ENCODE measurements at regions of chr12 and their contacts with region 1.

Region 1: DNA sequence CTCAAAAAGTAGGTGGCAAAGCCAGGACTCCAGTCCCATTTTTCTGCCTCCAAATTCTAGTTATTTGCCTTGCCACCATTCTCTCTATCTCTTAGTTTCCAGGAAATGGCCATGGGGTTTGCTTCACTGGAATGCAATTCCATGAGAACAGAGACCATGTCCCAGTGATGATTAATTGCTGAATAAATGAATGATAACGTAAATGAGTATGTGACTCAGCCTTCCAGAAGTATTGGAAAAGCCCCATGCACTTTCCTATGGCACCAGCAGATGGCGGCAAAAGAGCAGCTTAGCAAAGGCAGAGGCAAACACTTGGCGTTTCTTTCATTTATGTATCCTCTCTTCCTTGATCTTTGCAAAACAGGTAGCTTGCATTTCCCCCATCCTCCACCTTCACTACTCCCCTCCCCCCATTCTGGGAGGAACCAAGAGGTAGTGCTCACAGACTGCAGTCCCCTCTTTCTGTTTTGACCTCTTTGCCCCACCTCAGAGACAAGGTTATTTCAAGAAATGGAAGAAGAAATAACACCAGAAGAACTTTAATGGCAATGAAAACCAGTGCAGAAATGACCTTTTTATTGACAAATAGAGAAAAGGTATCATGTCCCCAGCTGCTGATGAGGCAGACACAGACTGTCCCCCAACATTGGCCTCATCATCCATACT is 21.3 kb downstream of the TBX3 start:
- DNase-seq: peak; percentile 84 to 92
- H3K4me3 ChIP-seq: no peak overlapping the region
- H3K27ac ChIP-seq: no peak overlapping the region
- H3K4me1 ChIP-seq: no peaks in the 10 kb centered on the region
- H3K27me3 ChIP-seq: peaks cover 0 to 5% of the 10 kb centered on the region in 2 donors
- CTCF ChIP-seq: peak; percentile 88 to 95 (median 92)
- POLR2A ChIP-seq: no peak

Region 2: DNA sequence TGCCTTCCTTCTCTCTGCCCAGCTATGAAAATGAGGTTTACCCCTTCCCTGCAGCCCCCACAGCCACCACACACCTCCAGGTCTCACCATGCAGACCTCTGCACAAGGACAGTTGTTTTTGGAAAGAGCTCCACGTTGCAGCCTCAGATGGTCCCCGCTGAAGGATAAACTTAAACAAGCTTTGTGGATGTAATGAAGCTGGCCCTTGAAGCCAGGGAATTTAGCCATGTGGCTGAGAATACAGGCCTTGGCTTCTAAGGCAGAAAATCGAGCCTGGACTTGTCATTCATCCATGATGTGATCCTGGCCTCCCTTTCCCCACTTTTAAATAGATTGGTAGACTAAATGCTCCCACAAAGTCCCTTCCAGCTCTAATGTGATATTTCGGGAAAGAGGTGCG is 58.0 kb before region 1 on chr12:
- intact Hi-C with region 1: no loop called
- DNase-seq: no peak
- H3K4me3 ChIP-seq: no peak overlapping the region
- H3K27ac ChIP-seq: no peak overlapping the region
- H3K4me1 ChIP-seq: no peaks in the 10 kb centered on the region
- H3K27me3 ChIP-seq: no peaks in the 10 kb centered on the region
- CTCF ChIP-seq: no peak
- POLR2A ChIP-seq: no peak

Region 3: GRCh38 chr12:114794049-114794558 is 131.5 kb after region 1 on chr12:
- intact Hi-C with region 1: no loop called
- DNase-seq: no peak
- H3K4me3 ChIP-seq: no peak overlapping the region
- H3K27ac ChIP-seq: no peak overlapping the region
- H3K4me1 ChIP-seq: no peaks in the 10 kb centered on the region
- H3K27me3 ChIP-seq: no peaks in the 10 kb centered on the region
- CTCF ChIP-seq: no peak
- POLR2A ChIP-seq: no peak

Region 4: DNA sequence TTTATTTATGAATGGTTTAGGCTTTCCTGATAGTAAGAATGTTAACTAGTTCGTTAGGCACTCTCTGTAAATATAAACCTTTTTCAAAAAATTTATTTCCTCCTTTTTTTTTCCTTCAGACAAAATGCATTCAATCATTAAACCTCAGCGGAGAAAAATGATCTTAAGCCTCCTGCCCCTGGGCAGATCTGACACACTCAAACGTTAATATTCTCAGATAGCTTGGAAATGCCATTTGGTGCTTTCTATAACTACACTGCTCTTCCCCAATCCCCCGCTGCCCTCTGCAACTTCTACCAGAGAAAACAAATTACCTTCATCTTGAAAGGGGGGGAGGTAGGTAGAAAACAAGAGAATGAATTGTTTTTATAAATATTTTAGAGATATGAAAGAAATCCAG is 1093.6 kb after region 1 on chr12:
- intact Hi-C with region 1: loop called (anchors 2 kb)
- DNase-seq: no peak
- H3K4me3 ChIP-seq: no peak overlapping the region
- H3K27ac ChIP-seq: peak overlapping the region in 1 of 2 donors; percentile 66
- H3K4me1 ChIP-seq: no peaks in the 10 kb centered on the region
- H3K27me3 ChIP-seq: no peaks in the 10 kb centered on the region
- CTCF ChIP-seq: no peak
- POLR2A ChIP-seq: no peak

Region 5: DNA sequence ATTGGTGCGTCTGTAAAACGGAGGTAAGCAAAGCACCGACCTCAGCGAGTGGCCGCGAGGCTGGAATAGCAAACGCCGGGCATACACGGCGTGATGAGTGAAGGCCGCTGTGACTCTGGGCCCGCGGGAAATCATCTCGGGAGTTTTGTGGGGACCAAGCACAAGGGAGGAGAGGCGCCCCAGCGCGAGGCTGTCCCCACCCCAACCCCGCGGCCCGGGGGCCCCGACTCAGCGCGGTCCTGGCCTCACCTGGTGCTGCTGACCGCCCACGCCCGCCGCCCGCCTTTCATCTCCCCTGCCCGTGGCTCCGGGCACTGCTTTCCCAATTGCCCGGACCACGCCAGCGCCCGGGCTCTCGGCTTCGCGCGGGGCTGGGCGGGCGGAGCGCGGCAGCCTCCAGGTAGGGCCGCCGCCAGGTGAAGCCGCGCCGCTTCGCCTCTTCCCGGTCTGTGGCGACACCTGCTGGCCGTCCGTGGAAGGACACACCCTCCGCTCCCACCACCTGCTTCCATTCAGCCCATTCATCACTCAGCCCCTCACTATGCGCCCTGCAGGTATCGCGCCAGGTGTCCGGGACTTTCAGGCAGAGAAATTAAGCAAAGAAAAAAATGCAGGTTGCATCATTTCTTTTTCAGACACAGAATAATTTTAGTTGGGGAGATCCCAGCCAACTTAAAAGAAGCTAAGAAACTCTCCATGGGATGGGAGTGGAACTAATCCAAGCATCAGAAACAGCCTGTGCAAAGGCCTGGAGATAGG is 1254.4 kb after region 1 on chr12:
- intact Hi-C with region 1: loop called (anchors 5 kb)
- DNase-seq: peak; percentile 45 to 56
- H3K4me3 ChIP-seq: no peak overlapping the region
- H3K27ac ChIP-seq: no peak overlapping the region
- H3K4me1 ChIP-seq: peaks cover 0 to 3% of the 10 kb centered on the region in 2 donors
- H3K27me3 ChIP-seq: peaks cover 0 to 9% of the 10 kb centered on the region in 2 donors
- CTCF ChIP-seq: peak; percentile 92 to 96 (median 94)
- POLR2A ChIP-seq: no peak